HEK293T (cell line): ENCODE measurements at regions of chr1 and their contacts with region 1.

Region 1: DNA sequence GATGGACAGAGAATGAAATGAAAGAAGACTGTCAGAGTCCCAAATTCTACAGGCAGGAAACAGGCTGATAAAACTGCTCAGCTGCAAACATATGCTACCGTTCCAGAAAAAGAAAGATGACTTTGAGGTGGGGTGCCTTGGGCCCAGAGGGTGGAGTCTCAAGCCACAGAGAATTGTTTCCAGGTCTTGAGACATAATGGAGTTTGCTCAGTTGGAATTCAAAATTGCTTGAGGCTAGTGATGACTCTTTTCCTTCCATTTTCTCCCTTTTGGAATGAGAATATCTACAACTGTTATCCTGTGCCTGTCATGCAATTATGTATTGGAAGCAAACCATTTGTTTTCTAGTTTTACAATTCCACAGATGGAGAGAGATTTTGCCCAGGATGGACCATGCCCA is 23.6 kb upstream of the PSEN2 start:
- DNase-seq: no peak

Region 2: GRCh38 chr1:226827968-226828513 is 18.8 kb before region 1 on chr1:
- CTCF ChIA-PET with region 1: interaction called, 16 read pairs
- POLR2A ChIA-PET with region 1: no interaction called
- DNase-seq: peak; percentile 99

Region 3: GRCh38 chr1:227469708-227470107 is 622.9 kb after region 1 on chr1:
- CTCF ChIA-PET with region 1: no interaction called
- POLR2A ChIA-PET with region 1: no interaction called
- DNase-seq: no peak